Cardiac septum (tissue), 1 donor: ENCODE measurements at regions of chr18 and their contacts with region 1.

Region 1: DNA sequence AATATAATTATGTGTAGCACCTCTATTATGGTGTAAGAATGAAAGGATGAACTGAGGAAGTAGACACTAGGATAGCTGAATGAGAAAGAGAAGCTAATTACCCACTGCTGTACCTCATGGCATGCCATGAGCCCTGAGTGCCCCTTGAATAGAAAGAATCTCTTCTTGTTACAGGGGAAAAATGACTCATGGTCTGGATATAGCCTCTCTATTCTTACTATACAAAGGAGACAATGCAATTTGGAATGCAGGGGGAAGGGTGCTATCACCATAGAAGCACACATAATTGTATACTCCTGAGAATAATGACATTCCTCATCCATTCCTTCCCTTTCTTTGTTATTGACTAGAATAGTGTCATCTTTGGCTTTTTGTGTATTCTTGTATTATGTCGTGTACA is 385.2 kb downstream of the CDH7 start:
- DNase-seq: no peak

Region 2: GRCh38 chr18:66300141-66300540 is 164.1 kb after region 1 on chr18:
- intact Hi-C with region 1: no loop called
- DNase-seq: no peak

Region 3: DNA sequence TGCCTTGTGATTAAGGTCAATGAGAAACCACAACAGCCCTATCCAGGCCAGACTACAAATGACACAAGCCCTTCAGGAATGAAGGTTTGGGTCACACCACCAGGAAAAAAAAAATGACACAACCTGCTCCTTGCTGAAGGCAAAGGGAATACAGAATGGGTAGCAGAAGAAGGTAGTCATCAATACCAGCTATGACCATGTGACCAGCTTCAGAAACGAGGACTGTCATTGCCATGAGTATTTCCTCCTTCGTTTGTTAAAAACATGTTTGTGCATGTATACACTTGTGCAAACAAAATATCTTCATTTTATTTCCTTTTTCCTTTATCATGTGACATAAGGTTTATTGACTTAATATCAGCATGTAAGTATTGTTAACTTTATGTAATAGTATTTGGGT is 241.3 kb after region 1 on chr18:
- intact Hi-C with region 1: loop called (anchors 5 kb)
- DNase-seq: no peak